Naive thymus-derived CD4-positive, alpha-beta T cell (primary cell): ENCODE measurements at regions of chr12 and their contacts with region 1.

Region 1: GRCh38 chr12:52582971-52583456 is 9.4 kb upstream of the KRT74 start:
- DNase-seq: peak; percentile 47 to 83 (median 76)
- ATAC-seq: peak; percentile 67
- H3K4me3 ChIP-seq: no peak overlapping the region
- H3K4me3 Mint-ChIP-seq: peak overlapping the region in 5 of 10 donors; percentile 9 to 50 (median 31)
- H3K27ac ChIP-seq: peak overlapping the region; percentile 20
- H3K27ac Mint-ChIP-seq: peak overlapping the region; percentile 21 to 97 (median 85)
- H3K4me1 ChIP-seq: peaks cover 0 to 60% of the 10 kb centered on the region in 2 donors
- H3K4me1 Mint-ChIP-seq: peaks cover 39 to 72% (median 64%) of the 10 kb centered on the region in 7 donors
- H3K27me3 ChIP-seq: no peaks in the 10 kb centered on the region
- H3K27me3 Mint-ChIP-seq: peaks cover 0 to 4% (median 0%) of the 10 kb centered on the region in 5 donors

Region 2: GRCh38 chr12:52156736-52157565 is 426.1 kb before region 1 on chr12:
- CTCF ChIA-PET with region 1: no interaction called
- POLR2A ChIA-PET with region 1: no interaction called
- intact Hi-C with region 1: loop called in 1 of 2 experiments (anchors 5 kb)
- DNase-seq: peak; percentile 46 to 80 (median 64)
- ATAC-seq: peak; percentile 56
- H3K4me3 ChIP-seq: no peak overlapping the region
- H3K4me3 Mint-ChIP-seq: no peak overlapping the region
- H3K27ac ChIP-seq: no peak overlapping the region
- H3K27ac Mint-ChIP-seq: peak overlapping the region in 8 of 9 donors; percentile 41 to 97 (median 85)
- H3K4me1 ChIP-seq: peaks cover 25 to 27% of the 10 kb centered on the region in 2 donors
- H3K4me1 Mint-ChIP-seq: peaks cover 22 to 36% (median 34%) of the 10 kb centered on the region in 7 donors
- H3K27me3 ChIP-seq: no peaks in the 10 kb centered on the region
- H3K27me3 Mint-ChIP-seq: no peaks in the 10 kb centered on the region

Region 3: DNA sequence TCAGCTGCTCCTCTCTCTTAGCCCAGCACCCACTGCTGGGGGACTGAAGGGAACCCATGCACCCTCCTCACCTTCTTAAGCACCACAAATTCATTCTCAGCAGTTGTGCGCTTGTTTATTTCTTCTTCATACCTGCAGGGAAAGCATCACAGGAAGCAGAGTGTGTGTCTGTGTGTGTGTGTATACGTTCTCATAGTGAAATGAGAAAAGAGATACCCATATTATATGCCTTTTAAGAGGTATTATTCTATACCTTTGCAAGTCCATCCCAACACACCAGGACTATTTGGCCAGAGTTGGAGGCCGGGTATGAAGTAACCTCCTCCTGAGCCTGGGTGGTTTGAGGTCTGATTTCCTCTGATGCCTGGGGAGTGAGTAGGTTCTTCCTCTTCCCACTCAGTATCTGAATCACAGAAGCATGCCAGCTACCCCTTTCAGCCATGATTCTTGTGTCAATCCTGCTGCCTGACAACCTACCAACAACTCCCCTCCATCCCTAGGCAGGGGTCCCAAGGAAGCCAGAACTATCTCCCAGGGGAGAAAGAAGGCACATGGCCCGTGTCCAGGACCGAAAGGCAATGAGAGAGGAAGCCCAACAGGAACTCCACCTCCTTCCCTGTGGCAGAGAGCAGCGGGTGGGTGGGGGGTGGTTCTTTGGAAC is 32.3 kb after region 1 on chr12:
- CTCF ChIA-PET with region 1: interaction called, 163 read pairs
- POLR2A ChIA-PET with region 1: interaction called, 112 read pairs
- intact Hi-C with region 1: loop called (anchors 1 kb)
- DNase-seq: peak in 6 of 9 donors; percentile 37 to 72 (median 64)
- ATAC-seq: peak; percentile 36
- H3K4me3 ChIP-seq: peak overlapping the region; percentile 5
- H3K4me3 Mint-ChIP-seq: peak overlapping the region; percentile 31 to 85 (median 64)
- H3K27ac ChIP-seq: peak overlapping the region; percentile 84
- H3K27ac Mint-ChIP-seq: peak overlapping the region; percentile 69 to 99 (median 97)
- H3K4me1 ChIP-seq: peaks cover 6 to 82% of the 10 kb centered on the region in 2 donors
- H3K4me1 Mint-ChIP-seq: peaks cover 54 to 97% (median 94%) of the 10 kb centered on the region in 7 donors
- H3K27me3 ChIP-seq: no peaks in the 10 kb centered on the region
- H3K27me3 Mint-ChIP-seq: peaks cover 0 to 8% (median 0%) of the 10 kb centered on the region in 5 donors

Region 4: DNA sequence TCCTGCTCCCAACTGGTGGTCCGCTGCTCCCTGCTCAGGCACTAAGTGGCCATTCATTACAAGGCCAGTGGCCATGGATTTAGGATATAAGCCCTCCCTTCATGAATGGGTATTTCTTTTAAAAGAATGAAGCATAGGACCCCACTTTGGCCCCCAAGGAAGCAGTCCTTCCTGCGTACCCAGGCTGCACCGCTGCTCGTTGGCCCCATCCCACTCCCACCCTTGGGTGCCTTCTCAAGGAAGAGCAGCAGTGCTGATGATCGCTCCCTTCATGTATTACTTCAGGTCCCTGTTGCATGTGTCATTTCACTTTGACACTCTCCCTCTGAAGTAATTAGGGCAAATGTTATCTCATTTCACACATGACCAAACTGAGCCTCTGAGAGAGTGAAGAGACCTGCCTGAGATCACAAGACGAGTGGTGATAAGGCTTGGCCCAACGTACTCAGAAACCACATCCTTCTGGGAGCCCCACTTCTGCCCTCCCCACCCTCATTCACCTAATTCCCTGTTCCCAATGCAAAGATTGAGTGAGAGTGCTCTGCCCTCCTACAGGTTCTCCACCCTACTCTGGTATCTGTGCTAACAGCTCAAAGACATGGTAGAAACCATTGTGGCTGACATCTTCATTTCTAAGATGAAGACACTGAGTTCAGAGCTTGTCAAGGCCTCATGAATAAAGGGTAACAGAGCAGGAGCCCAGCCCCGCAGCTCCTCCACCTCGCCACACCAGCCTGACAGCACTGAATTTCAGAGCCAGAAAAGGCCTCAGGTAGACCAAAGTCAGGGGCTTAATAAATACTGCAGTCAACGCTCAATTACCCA is 79.3 kb after region 1 on chr12:
- CTCF ChIA-PET with region 1: interaction called, 10 read pairs
- POLR2A ChIA-PET with region 1: interaction called, 5 read pairs
- intact Hi-C with region 1: no loop called
- DNase-seq: no peak
- ATAC-seq: no peak
- H3K4me3 ChIP-seq: no peak overlapping the region
- H3K4me3 Mint-ChIP-seq: no peak overlapping the region
- H3K27ac ChIP-seq: no peak overlapping the region
- H3K27ac Mint-ChIP-seq: peak overlapping the region in 4 of 9 donors; percentile 67 to 90 (median 73)
- H3K4me1 ChIP-seq: no peaks in the 10 kb centered on the region
- H3K4me1 Mint-ChIP-seq: peaks cover 5 to 30% (median 16%) of the 10 kb centered on the region in 7 donors
- H3K27me3 ChIP-seq: no peaks in the 10 kb centered on the region
- H3K27me3 Mint-ChIP-seq: peaks cover 0 to 22% (median 0%) of the 10 kb centered on the region in 5 donors

Region 5: GRCh38 chr12:52708010-52708409 is 125.0 kb after region 1 on chr12:
- CTCF ChIA-PET with region 1: interaction called, 18 read pairs
- POLR2A ChIA-PET with region 1: no interaction called
- intact Hi-C with region 1: no loop called
- DNase-seq: peak in 7 of 9 donors; percentile 26 to 66 (median 52)
- ATAC-seq: peak; percentile 49
- H3K4me3 ChIP-seq: no peak overlapping the region
- H3K4me3 Mint-ChIP-seq: peak overlapping the region in 5 of 10 donors; percentile 11 to 63 (median 50)
- H3K27ac ChIP-seq: no peak overlapping the region
- H3K27ac Mint-ChIP-seq: peak overlapping the region in 8 of 9 donors; percentile 75 to 91 (median 83)
- H3K4me1 ChIP-seq: peaks cover 0 to 23% of the 10 kb centered on the region in 2 donors
- H3K4me1 Mint-ChIP-seq: peaks cover 4 to 62% (median 40%) of the 10 kb centered on the region in 7 donors
- H3K27me3 ChIP-seq: no peaks in the 10 kb centered on the region
- H3K27me3 Mint-ChIP-seq: peaks cover 0 to 29% (median 0%) of the 10 kb centered on the region in 5 donors

Region 6: GRCh38 chr12:52759695-52760094 is 176.7 kb after region 1 on chr12:
- CTCF ChIA-PET with region 1: interaction called, 7 read pairs
- POLR2A ChIA-PET with region 1: interaction called, 7 read pairs
- intact Hi-C with region 1: loop called in 1 of 2 experiments (anchors 1 kb)
- DNase-seq: no peak
- ATAC-seq: no peak
- H3K4me3 ChIP-seq: no peak overlapping the region
- H3K4me3 Mint-ChIP-seq: no peak overlapping the region
- H3K27ac ChIP-seq: no peak overlapping the region
- H3K27ac Mint-ChIP-seq: no peak overlapping the region
- H3K4me1 ChIP-seq: no peaks in the 10 kb centered on the region
- H3K4me1 Mint-ChIP-seq: no peaks in the 10 kb centered on the region
- H3K27me3 ChIP-seq: no peaks in the 10 kb centered on the region
- H3K27me3 Mint-ChIP-seq: no peaks in the 10 kb centered on the region

Region 7: DNA sequence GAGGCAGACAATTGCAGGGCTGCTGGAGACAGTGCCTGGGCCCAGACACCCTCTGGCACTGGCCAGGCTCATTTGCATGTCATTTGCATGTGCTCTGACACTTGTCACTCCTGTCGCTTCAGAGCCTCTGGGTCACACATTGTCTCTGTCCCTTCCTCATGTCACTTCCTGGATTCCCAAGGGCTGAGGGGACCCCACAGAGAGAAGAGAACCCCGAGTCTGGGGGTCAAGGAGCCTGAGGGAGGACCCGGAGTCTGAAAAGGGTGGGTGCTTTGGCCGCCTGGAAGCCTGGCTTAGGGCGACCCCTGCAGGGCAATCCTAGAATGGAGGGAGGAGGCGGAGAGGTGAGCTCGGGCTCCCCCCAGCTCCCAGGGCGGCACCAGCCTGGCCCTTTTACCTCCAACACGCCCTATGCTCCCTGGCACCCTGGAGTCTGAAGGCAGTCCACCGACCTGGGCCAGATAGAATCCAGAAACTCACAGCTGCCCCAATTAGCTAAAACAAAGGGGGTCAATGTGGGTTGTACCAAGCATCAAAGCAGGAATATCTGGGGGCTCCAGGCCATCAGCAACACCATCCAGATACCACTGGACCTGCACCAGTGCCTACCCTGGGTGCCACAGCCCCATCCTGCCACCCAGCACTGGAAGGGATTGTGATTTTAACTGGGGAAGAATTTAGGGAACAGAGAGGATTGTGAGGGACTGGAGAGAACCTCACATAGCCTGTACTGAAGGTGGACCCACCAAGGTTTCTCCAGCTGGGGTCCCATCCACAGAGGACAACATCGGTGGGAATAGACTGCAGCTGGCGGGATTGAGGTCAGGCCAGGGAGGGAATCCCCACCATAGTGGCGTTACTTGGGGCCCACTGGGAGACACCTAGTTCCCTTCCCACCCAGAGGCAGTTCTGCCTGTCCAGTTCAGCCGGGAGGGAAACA is 287.6 kb after region 1 on chr12:
- CTCF ChIA-PET with region 1: interaction called, 731 read pairs
- POLR2A ChIA-PET with region 1: interaction called, 62 read pairs
- intact Hi-C with region 1: loop called (anchors 1 kb)
- DNase-seq: peak; percentile 70 to 94 (median 82)
- ATAC-seq: peak; percentile 79
- H3K4me3 ChIP-seq: no peak overlapping the region
- H3K4me3 Mint-ChIP-seq: peak overlapping the region in 1 of 10 donors; percentile 29
- H3K27ac ChIP-seq: no peak overlapping the region
- H3K27ac Mint-ChIP-seq: peak overlapping the region in 8 of 9 donors; percentile 19 to 95 (median 74)
- H3K4me1 ChIP-seq: peaks cover 0 to 26% of the 10 kb centered on the region in 2 donors
- H3K4me1 Mint-ChIP-seq: peaks cover 29 to 56% (median 47%) of the 10 kb centered on the region in 7 donors
- H3K27me3 ChIP-seq: no peaks in the 10 kb centered on the region
- H3K27me3 Mint-ChIP-seq: peaks cover 0 to 13% (median 0%) of the 10 kb centered on the region in 5 donors